Aorta (tissue), 5 donors: ENCODE measurements at regions of chr4 and their contacts with region 1.

Region 1: GRCh38 chr4:79650794-79651431 is 242.9 kb upstream of the GK2 start:
- DNase-seq: no peak
- ATAC-seq: no peak
- H3K4me3 ChIP-seq: no peak overlapping the region
- H3K27ac ChIP-seq: peak overlapping the region in 1 of 2 donors; percentile 82
- H3K4me1 ChIP-seq: peaks cover 2 to 4% of the 10 kb centered on the region in 2 donors
- H3K27me3 ChIP-seq: no peaks in the 10 kb centered on the region

Region 2: GRCh38 chr4:79502081-79502480 is 148.8 kb before region 1 on chr4:
- intact Hi-C with region 1: loop called in 1 of 2 experiments (anchors 5 kb)
- DNase-seq: no peak
- ATAC-seq: no peak
- H3K4me3 ChIP-seq: no peak overlapping the region
- H3K27ac ChIP-seq: no peak overlapping the region
- H3K4me1 ChIP-seq: no peaks in the 10 kb centered on the region
- H3K27me3 ChIP-seq: no peaks in the 10 kb centered on the region

Region 3: GRCh38 chr4:79609817-79610216 is 41.1 kb before region 1 on chr4:
- intact Hi-C with region 1: loop called in 1 of 2 experiments (anchors 5 kb)
- DNase-seq: no peak
- ATAC-seq: peak; percentile 19
- H3K4me3 ChIP-seq: no peak overlapping the region
- H3K27ac ChIP-seq: no peak overlapping the region
- H3K4me1 ChIP-seq: peaks cover 0 to 2% of the 10 kb centered on the region in 2 donors
- H3K27me3 ChIP-seq: no peaks in the 10 kb centered on the region

Region 4: GRCh38 chr4:79848329-79848728 is 197.4 kb after region 1 on chr4:
- intact Hi-C with region 1: no loop called
- DNase-seq: no peak
- ATAC-seq: no peak
- H3K4me3 ChIP-seq: no peak overlapping the region
- H3K27ac ChIP-seq: no peak overlapping the region
- H3K4me1 ChIP-seq: peaks cover 0 to 1% of the 10 kb centered on the region in 2 donors
- H3K27me3 ChIP-seq: no peaks in the 10 kb centered on the region